ENCODE measurements at regions of chr15 and their contacts with region 1.

Region 1: GRCh38 chr15:70632491-70633397 is 130.6 kb downstream of the UACA start:
- DNase-seq: no peak
- ATAC-seq: no peak

Region 2: GRCh38 chr15:70569091-70569621 is 63.6 kb before region 1 on chr15:
- intact Hi-C with region 1: loop called (anchors 2 kb)
- DNase-seq: no peak
- ATAC-seq: peak; percentile 95

Region 3: DNA sequence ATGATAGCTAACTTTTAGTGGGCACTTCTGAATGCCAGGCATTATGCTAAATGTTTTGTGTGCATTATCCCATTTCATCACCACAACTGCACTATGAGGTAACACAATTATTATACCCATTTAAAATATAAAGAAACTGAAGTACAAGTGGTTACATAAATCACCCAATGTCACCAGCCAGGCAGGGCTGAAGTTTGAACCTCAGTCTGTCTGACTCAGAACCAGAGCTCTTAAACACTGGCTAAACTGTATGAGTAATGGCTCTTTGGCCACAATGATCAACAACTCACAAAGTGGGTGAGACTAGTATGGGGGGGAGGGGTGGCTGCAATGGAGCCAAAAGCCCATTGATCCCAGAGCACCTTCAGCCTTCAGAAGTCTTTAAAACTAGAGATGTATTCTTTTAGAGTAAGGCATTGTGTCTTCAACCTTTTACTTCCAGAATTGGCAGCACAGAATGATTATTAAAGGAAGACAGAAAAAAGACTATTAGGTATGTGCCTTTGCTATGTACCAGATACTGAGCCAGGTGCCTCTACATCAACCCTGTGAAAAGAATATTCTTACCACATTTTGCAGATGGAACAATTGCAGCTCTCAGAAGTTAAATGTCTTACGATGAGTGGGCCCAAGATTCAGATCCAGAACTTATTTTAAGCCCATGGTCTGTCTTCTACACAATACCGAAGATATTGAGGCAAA is 36.2 kb before region 1 on chr15:
- intact Hi-C with region 1: no loop called
- DNase-seq: no peak
- ATAC-seq: no peak